Testis (tissue), 5 donors: ENCODE measurements at regions of chr12 and their contacts with region 1.

Region 1: GRCh38 chr12:117367011-117367638 is 5.7 kb upstream of the NOS1 start:
- DNase-seq: peak; percentile 91
- H3K4me3 ChIP-seq: no peak overlapping the region
- H3K27ac ChIP-seq: no peak overlapping the region
- H3K4me1 ChIP-seq: no peaks in the 10 kb centered on the region
- H3K27me3 ChIP-seq: no peaks in the 10 kb centered on the region
- CTCF ChIP-seq: peak in 2 of 3 experiments; percentile 85 to 87
- POLR2A ChIP-seq: no peak

Region 2: GRCh38 chr12:116861320-116861719 is 505.8 kb before region 1 on chr12:
- intact Hi-C with region 1: no loop called
- DNase-seq: peak; percentile 47
- H3K4me3 ChIP-seq: no peak overlapping the region
- H3K27ac ChIP-seq: no peak overlapping the region
- H3K4me1 ChIP-seq: peaks cover 18% of the 10 kb centered on the region
- H3K27me3 ChIP-seq: no peaks in the 10 kb centered on the region
- CTCF ChIP-seq: no peak
- POLR2A ChIP-seq: no peak

Region 3: GRCh38 chr12:117090816-117091711 is 276.1 kb before region 1 on chr12:
- intact Hi-C with region 1: no loop called
- DNase-seq: no peak
- H3K4me3 ChIP-seq: no peak overlapping the region
- H3K27ac ChIP-seq: no peak overlapping the region
- H3K4me1 ChIP-seq: no peaks in the 10 kb centered on the region
- H3K27me3 ChIP-seq: no peaks in the 10 kb centered on the region
- CTCF ChIP-seq: no peak
- POLR2A ChIP-seq: no peak

Region 4: GRCh38 chr12:117596968-117597367 is 229.8 kb after region 1 on chr12:
- intact Hi-C with region 1: loop called (anchors 10 kb)
- DNase-seq: no peak
- H3K4me3 ChIP-seq: no peak overlapping the region
- H3K27ac ChIP-seq: no peak overlapping the region
- H3K4me1 ChIP-seq: no peaks in the 10 kb centered on the region
- H3K27me3 ChIP-seq: no peaks in the 10 kb centered on the region
- CTCF ChIP-seq: no peak
- POLR2A ChIP-seq: no peak

Region 5: DNA sequence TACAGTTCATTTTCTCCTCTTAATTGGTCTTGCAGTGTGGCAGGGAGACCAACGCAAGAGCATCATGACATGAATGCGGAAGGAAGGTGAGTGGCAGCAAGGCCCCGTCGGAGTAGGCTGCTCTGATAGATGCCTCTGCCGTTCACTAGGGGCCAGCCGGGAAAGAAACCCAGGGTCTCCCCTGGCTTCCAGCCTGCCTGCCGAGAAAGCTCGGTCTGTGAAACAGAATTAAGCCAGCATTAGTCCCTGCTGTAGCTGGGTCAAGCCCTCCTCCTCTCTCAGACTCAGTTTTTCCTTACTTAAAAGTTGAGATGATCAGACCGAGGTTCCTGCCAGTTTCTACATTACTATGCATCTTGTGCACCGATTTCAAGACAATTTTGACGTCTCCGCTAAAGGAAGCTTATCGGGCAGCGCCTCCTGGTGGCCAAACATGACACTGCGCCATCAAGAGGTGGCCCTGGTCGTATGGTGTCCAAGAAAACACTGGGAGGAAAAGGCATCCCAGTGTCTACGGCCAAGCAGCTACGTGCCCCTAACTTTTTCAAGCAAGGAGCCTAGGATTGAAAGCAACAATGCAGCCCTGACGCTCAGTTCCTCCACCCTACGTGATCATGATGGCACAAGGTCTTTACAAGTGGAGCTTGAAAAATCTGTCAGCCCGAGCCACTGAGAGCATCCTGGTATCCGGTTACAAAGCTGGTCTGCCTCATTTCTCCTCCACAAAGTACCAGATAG is 470.0 kb after region 1 on chr12:
- intact Hi-C with region 1: loop called (anchors 10 kb)
- DNase-seq: peak; percentile 91
- H3K4me3 ChIP-seq: no peak overlapping the region
- H3K27ac ChIP-seq: no peak overlapping the region
- H3K4me1 ChIP-seq: no peaks in the 10 kb centered on the region
- H3K27me3 ChIP-seq: no peaks in the 10 kb centered on the region
- CTCF ChIP-seq: peak; percentile 90 to 97 (median 92)
- POLR2A ChIP-seq: no peak